OCI-LY7 (cell line): ENCODE measurements at regions of chr1 and their contacts with region 1.

Region 1: GRCh38 chr1:9874959-9875635 is 35.0 kb downstream of the CTNNBIP1 start:
- DNase-seq: peak; percentile 81
- H3K4me3 ChIP-seq: no peak overlapping the region
- H3K27ac ChIP-seq: no peak overlapping the region
- H3K4me1 ChIP-seq: peaks cover 40% of the 10 kb centered on the region
- CTCF ChIP-seq: peak; percentile 98

Region 2: DNA sequence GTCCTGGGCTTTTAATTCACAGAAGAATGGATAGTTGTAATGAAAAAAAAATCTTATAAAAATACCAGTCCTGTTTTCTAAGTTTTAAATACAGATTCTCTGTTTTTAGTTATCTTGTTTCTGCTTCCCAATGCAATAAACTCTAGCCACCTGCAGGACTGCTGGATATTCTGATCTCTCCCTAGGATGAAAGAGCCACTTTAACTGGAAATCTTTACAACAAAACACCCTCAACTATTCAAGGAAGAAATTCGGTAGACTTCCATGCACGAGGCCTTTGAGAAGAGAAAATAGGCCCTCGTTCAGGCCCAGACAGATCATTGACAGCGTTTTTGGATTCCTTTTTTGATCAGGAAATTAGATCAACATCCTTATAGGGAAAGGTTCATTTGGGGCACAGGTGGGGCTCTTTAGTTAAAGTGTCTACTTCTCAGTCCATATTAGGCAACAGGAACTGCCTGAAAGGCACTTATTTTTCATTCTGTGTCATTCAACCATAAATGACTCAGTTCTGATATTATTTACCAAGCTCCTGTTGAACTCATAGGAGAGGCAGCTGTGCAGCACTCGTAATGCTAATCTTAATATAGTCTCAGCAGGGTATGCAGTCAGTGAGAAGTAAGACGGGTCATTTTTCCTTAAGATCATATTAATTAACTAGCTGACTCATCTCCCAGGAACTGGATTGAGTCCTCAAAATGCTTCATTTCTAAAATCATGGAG is 1777.9 kb before region 1 on chr1:
- CTCF ChIA-PET with region 1: no interaction called
- POLR2A ChIA-PET with region 1: no interaction called
- intact Hi-C with region 1: no loop called
- DNase-seq: peak; percentile 54
- H3K4me3 ChIP-seq: peak overlapping the region; percentile 26
- H3K27ac ChIP-seq: peak overlapping the region; percentile 37
- H3K4me1 ChIP-seq: peaks cover 26% of the 10 kb centered on the region
- CTCF ChIP-seq: no peak

Region 3: GRCh38 chr1:9910425-9911178 is 35.5 kb after region 1 on chr1:
- CTCF ChIA-PET with region 1: interaction called, 3 read pairs
- POLR2A ChIA-PET with region 1: no interaction called
- intact Hi-C with region 1: loop called (anchors 1 kb)
- DNase-seq: peak; percentile 99
- H3K4me3 ChIP-seq: peak overlapping the region; percentile 70
- H3K27ac ChIP-seq: peak overlapping the region; percentile 85
- H3K4me1 ChIP-seq: peaks cover 16% of the 10 kb centered on the region
- CTCF ChIP-seq: no peak

Region 4: DNA sequence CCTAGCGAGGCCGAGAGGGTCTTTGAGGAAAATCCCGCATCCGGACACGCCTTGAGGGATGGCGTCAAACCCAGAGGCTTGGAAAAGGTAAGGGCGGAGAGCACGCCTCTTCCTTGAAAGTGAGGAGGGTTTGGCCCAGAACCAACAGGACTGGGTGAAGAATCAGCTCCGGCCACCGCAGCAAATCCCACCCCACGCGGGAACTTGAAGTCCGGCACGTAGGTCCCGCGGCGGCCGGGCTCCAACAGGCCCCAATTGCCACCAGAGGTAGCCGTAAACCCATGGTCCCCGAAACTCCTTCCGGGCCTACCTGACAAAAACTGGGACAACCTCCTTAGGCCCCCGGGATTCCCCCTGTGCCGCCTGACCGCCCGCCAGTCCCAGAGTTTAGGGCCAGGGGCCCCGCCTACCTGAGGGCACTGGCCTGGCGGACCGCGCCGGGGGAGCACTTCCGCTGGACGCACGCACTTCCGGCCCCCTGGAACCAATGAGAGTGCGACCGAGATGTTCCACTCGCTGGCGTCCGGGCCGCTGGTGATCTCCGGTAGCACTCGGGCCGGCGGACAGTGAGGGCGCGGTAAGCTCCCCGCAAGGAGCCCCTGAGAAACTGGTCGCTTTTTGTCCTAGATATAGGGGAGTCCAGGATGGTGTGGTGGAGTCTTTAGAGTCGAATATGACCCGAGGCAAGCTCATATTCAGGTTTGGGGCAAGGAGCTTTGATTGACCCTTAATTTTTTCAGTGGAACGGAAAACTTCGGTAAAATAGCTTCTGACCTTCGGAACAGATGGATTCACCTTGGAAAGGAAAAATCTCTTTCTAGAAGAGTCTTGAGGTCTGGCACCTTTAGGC is 68.1 kb after region 1 on chr1 and contains the starts of genes LZIC and NMNAT1:
- CTCF ChIA-PET with region 1: no interaction called
- POLR2A ChIA-PET with region 1: no interaction called
- intact Hi-C with region 1: loop called (anchors 1 kb)
- DNase-seq: peak; percentile 96
- H3K4me3 ChIP-seq: peak within 1 kb of the TSS; percentile 89
- H3K27ac ChIP-seq: peak within 1 kb of the TSS; percentile 74
- H3K4me1 ChIP-seq: peaks cover 10% of the 10 kb centered on the region
- CTCF ChIP-seq: no peak
- total RNA-seq, gene LZIC: 19.1 and 29.3 TPM in 2 replicates
- total RNA-seq, gene NMNAT1: 3.8 and 5.4 TPM in 2 replicates

Region 5: GRCh38 chr1:9960706-9961562 is 85.8 kb after region 1 on chr1:
- CTCF ChIA-PET with region 1: no interaction called
- POLR2A ChIA-PET with region 1: no interaction called
- intact Hi-C with region 1: no loop called
- DNase-seq: peak; percentile 79
- H3K4me3 ChIP-seq: peak overlapping the region; percentile 44
- H3K27ac ChIP-seq: peak overlapping the region; percentile 45
- H3K4me1 ChIP-seq: peaks cover 15% of the 10 kb centered on the region
- CTCF ChIP-seq: no peak

Region 6: DNA sequence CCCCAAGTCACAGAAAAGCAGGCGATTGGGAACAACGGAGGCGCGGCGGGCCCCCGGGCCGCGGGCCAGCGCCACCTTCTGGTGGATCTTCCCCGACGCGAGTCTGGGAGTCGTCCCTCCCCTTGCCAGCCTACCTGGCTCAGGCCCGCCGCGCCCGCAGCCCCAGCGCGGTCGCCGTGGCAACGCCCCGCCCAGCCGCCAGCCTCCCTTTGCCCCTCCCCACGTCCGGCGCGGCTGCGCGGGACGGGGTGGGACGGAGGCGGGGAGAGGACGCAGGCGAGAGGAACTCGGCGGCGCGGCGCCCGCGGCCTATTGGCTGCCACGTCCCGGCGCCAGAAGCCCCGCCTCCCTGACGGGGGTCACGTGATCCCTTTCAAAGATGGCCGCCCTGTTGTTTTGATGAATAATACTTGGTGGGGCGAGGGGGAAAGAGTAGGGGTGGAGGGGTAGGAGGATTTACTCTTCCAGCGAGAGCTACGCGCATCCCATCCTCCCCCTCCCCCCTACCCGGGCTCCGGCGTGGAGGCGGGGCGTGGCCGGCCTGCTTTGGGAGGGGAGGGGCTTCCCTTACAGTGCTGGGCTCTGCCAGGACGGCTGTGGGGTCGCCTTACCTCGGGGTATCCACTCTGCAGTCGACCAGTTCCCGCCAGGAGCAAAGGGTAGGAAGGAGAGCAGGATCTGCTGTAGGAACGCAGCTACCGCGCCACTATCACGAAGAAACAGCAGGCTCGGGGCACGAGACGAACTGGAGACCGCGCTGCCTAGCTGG is 157.7 kb after region 1 on chr1 and contains the start of gene UBE4B:
- CTCF ChIA-PET with region 1: no interaction called
- POLR2A ChIA-PET with region 1: no interaction called
- intact Hi-C with region 1: loop called (anchors 1 kb)
- DNase-seq: peak; percentile 98
- H3K4me3 ChIP-seq: peak within 1 kb of the TSS; percentile 98
- H3K27ac ChIP-seq: peak within 1 kb of the TSS; percentile 80
- H3K4me1 ChIP-seq: peaks cover 16% of the 10 kb centered on the region
- CTCF ChIP-seq: peak; percentile 84
- total RNA-seq, gene UBE4B: 19.7 and 21.5 TPM in 2 replicates

Region 7: GRCh38 chr1:10338047-10338446 is 462.9 kb after region 1 on chr1:
- CTCF ChIA-PET with region 1: no interaction called
- POLR2A ChIA-PET with region 1: no interaction called
- intact Hi-C with region 1: loop called (anchors 2 kb)
- DNase-seq: peak; percentile 59
- H3K4me3 ChIP-seq: no peak overlapping the region
- H3K27ac ChIP-seq: no peak overlapping the region
- H3K4me1 ChIP-seq: no peaks in the 10 kb centered on the region
- CTCF ChIP-seq: peak; percentile 96